Head of caudate nucleus (tissue), 42 donors: ENCODE measurements at regions of chr10 and their contacts with region 1.

Region 1: GRCh38 chr10:5813287-5814109 is at the start of gene GDI2:
- DNase-seq: peak; percentile 91 to 98 (median 97)

Region 2: DNA sequence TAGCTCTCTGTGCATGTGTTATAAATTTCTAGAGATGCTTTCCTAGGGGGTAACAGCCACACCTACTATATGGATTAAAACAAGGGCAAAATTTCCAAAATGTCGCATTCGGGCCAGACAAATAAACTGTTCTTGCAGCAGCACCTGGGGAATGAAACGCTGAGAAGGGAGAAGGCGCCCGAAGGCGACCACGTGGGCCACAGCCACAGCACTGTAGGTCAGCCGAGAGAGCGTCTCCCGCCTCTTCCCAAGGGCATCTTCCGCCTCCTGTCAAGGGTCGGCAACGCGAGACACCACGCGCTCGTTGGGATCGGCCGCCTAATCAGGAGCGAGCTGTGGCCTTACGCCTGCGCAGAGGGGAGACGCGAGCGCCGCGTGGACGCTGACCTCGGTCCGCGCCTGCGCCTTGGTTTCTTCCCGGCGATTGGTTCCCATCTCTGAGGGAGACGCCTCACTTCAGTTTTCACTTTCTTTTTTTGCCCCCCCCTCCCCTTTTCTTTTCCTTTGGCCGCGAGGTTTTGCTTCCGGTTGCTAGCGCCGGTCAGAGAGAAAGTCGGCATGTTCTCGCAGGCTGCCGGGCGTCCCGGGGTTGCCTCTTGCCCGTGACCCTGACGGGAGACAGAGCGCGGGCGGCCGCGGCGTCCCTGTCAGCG is 129.1 kb before region 1 on chr10 and contains the start of gene TASOR2:
- intact Hi-C with region 1: loop called (anchors 2 kb)
- DNase-seq: peak; percentile 92 to 99 (median 97)

Region 3: DNA sequence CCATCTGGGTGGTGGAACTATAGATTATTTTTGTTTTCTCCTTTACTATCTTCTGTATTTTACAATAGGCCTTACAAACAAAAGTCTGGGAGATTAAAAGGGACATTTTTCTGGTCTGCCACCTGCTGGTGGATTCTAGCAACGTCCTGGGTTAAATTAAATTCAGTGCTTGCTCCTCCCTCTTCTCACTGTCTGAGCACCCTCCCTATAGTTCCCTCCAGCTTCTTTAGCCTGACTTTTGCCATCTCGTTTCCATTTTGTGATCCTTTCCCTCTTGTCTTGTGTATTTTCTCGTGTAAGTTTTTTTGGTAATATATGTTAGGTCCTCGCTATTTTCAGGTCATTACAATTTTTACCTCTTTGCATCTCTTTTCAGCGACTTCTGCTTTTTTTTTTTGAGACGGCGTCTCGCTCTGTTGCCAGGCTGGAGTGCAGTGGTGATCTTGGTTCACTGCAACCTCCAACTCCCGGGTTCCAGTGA is 60.1 kb after region 1 on chr10:
- intact Hi-C with region 1: loop called (anchors 2 kb)
- DNase-seq: peak in 41 of 42 donors; percentile 23 to 92 (median 73)

Region 4: DNA sequence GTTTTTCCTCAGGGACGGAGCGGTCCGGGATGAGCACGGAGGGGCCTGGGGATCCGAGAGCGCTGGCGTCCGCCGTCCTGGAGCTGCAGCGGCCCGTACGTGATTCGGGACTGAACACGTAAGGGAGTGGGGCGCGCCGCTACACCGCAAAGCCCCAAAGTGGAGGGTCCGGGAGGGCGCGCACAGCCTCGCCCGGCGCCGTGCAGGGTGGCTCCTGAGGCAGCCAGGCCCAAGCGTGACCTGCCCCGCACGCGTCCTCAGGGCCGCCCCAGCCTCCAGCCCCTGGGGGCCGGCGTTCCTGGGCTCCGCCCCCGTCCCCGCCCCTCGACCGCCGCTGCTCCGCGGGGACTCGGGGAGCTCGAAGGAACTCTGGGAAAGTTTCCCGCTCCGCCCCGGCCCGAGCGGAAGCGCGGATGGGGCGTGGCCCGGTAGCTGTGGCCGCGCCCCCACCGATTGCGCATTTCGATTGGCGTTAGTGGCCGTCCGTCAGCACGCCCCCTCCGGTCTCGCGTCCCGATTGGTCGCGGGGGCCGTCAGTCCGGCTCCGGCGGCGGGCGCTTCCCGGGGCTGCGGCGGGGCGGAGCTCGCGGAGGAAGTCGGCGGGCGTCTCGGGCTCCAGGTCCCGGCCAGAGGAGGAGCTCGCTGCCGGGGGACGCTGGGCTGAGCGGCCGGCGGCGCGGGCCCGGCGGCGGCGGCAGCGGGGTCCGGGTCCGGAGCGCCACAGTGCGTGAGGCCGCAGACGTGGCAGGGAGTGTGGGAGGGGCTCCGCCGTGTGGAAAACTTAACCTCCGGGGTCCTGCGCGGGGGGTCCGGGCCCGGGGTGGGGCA is 76.3 kb after region 1 on chr10 and contains the starts of genes ANKRD16 and FBH1:
- intact Hi-C with region 1: loop called (anchors 5 kb)
- DNase-seq: peak; percentile 91 to 100 (median 98)